Dendritic cell treated with granulocyte-macrophage colony-stimulating factor and Interleukin-4, amounts not matched to agents 40 ng/mL and 50 ng/mL, for 4 days (primary cell): ENCODE measurements at regions of chr18 and their contacts with region 1.

Region 1: GRCh38 chr18:35949903-35950627 is 22.4 kb upstream of the RMP24 start:
- H3K4me3 Mint-ChIP-seq: peak overlapping the region; percentile 66
- H3K27ac Mint-ChIP-seq: no peak overlapping the region
- H3K4me1 Mint-ChIP-seq: peaks cover 11% of the 10 kb centered on the region
- H3K27me3 Mint-ChIP-seq: peaks cover 23% of the 10 kb centered on the region

Region 2: DNA sequence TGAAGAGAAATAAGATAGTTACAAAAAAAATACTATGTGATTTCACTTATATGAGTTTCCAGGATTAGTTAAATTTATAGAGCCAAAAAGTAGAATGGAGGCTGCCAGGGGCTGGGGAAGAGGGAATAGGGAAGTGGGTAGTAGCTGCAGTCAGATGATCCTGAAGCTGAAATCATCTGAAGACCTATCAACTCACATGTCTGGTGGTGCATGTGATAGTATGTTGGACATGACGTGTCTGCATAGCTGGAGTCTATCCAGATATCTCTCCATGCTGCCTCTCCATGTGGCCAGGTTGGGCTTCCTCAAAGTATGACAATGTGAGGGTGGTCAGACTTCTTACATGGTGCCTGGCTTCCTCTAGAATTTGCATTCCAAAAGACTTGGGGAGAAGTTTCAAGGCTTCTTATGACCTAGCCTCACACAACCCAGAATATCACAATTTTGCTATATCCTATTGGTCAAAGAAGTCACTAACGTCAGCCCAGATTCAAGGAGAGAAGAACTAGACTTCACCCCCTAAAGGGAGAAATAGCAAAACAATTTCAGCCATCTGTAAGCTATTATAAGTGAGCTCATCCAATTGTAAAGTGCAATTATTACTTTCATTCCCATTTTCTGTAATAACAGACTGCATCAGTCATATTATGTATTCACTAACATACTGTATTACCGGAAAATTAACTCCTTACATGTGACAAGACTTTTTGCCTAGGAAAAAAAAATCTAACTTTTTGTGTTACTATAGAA is 558.9 kb before region 1 on chr18:
- intact Hi-C with region 1: loop called (anchors 10 kb)
- H3K4me3 Mint-ChIP-seq: no peak overlapping the region
- H3K27ac Mint-ChIP-seq: no peak overlapping the region
- H3K4me1 Mint-ChIP-seq: peaks cover 11% of the 10 kb centered on the region
- H3K27me3 Mint-ChIP-seq: peaks cover 4% of the 10 kb centered on the region

Region 3: GRCh38 chr18:35756506-35757117 is 193.5 kb before region 1 on chr18:
- intact Hi-C with region 1: loop called (anchors 1 kb)
- H3K4me3 Mint-ChIP-seq: no peak overlapping the region
- H3K27ac Mint-ChIP-seq: no peak overlapping the region
- H3K4me1 Mint-ChIP-seq: peaks cover 6% of the 10 kb centered on the region
- H3K27me3 Mint-ChIP-seq: peaks cover 1% of the 10 kb centered on the region

Region 4: DNA sequence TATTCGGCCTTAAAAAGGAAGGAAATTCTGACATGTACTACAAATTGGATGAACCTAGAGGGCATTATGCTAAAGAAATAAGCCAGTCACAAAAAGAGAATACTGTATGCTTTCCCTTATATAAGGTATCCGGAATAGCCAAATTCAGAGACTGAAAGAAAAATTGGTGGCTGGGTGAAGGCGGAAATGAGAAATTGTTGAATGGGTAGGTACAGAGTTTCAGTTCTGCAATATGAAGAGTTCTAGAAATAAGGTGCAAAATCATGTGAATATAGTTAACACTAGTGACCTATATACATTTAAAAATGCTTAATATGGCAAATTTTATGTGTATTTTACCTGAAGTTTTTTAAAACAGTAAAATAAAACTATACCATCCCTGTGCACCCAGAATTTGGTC is 65.6 kb after region 1 on chr18:
- intact Hi-C with region 1: no loop called
- H3K4me3 Mint-ChIP-seq: no peak overlapping the region
- H3K27ac Mint-ChIP-seq: no peak overlapping the region
- H3K4me1 Mint-ChIP-seq: no peaks in the 10 kb centered on the region
- H3K27me3 Mint-ChIP-seq: no peaks in the 10 kb centered on the region

Region 5: DNA sequence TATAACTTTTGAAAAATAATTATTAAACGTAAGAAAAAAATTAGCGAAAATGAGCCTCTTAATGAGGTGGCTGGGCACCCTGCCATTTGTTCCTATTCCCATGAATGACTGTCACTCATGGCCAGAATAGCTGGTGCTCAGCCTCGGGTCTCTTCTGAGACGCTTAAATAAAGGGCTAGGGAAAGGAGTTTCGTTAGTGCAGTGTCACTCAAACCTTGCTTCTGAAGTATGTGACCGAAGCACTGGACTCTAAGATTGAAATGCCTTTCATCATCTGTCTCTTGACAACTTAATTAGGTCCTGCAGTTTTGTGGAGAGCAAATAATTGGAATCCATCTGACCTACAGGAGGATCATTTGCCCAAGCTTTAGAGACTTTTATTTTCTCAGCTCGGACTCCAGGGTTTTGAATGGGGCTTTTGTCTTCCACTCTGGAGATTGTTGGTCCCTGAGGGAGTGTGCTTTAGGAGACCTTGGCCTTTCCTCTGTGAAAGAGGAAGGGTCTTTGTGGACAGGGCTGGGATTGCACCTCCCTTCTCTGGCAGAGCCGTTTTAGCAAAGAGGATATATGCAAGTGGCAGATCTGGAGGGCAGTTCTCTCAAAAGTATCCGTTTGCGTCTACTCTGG is 305.1 kb after region 1 on chr18:
- intact Hi-C with region 1: no loop called
- H3K4me3 Mint-ChIP-seq: no peak overlapping the region
- H3K27ac Mint-ChIP-seq: no peak overlapping the region
- H3K4me1 Mint-ChIP-seq: no peaks in the 10 kb centered on the region
- H3K27me3 Mint-ChIP-seq: no peaks in the 10 kb centered on the region